Thyroid gland (tissue), 4 donors: ENCODE measurements at regions of chr2 and their contacts with region 1.

Region 1: DNA sequence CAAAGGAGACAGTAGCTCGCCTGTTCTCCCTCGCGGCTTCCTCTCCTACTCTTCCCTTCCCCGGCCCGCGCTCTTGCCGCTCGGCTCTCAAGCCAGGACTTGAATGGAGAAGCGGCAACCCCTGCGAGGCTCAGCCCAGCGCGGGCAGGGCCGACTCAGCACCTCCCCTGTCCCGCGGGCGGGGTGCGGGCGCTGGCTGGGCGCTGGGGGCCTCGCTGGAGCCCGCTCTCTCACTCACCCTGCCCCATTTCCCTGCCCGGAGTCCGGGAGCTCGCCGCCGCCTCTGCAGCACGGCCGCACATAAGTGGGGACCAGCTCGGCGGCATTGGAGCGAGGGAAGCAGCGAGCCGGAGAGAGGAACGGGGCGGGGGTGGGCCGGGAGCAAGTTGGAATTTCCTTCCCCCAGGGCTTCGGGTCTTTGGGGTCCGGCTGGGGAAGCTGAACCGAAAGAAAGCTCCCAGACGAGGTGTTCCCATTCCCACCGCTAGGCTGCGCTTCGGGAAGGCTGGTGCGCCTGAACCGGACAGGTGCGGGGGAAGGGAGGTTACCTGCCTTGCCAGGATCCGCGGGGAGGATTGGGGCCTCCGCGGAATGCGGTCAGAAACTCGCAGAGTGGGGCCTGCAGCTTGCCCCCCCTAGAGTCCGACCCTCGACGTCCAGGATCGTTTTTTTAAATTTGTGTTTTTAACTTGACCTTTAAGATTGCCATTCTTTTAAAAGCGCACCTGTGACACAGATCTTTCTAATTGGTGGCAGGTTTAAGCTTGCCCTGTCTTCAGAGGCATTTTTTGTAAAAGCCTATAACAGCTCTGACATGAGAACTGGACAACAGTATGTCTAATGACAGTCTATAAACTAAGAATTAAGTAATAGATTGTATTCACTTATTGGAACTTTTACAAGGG is at the start of gene COBLL1:
- DNase-seq: peak; percentile 92 to 95
- H3K4me3 ChIP-seq: peak within 1 kb of the TSS; percentile 71 to 79 (median 72)
- H3K27ac ChIP-seq: peak within 1 kb of the TSS; percentile 96 to 99 (median 99)
- H3K4me1 ChIP-seq: peaks cover 10 to 28% of the 10 kb centered on the region in 2 donors
- H3K27me3 ChIP-seq: no peaks in the 10 kb centered on the region
- CTCF ChIP-seq: peak; percentile 33 to 94 (median 89)
- POLR2A ChIP-seq: peak in 1 of 2 donors; percentile 84
- total RNA-seq, gene COBLL1: 41.8 to 90.8 (median 76.9) TPM

Region 2: GRCh38 chr2:164757924-164758695 is 83.9 kb before region 1 on chr2:
- intact Hi-C with region 1: loop called (anchors 10 kb)
- DNase-seq: no peak
- H3K4me3 ChIP-seq: no peak overlapping the region
- H3K27ac ChIP-seq: no peak overlapping the region
- H3K4me1 ChIP-seq: peaks cover 0 to 4% of the 10 kb centered on the region in 2 donors
- H3K27me3 ChIP-seq: no peaks in the 10 kb centered on the region
- CTCF ChIP-seq: no peak
- POLR2A ChIP-seq: no peak

Region 3: DNA sequence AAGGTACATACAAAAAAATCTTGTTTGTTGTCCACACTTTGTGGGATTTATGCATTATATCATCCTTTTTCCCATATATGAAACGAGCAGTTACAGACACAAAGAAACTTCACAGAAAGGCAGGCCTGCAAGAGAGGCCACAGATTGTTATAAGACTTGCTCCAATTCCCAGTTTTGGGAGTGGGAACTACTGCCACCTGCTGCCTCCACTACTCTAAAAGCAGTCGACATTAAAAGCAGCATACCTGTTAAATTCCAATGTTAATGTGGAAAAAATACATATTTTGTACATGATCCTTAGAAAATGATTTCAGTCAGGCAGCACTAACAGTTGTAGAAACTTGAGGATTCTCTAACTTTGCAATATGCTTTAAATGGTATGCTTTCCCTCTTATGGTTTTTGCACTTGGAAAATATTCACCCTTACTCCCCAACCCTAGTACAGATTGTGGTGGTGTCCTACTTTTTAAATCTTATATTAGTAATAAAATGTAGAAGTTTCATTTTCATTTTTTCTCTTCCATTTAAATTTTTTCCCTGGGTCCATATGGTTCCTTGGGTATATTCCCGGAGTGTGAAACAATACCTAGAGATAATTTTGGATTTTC is 75.4 kb after region 1 on chr2:
- intact Hi-C with region 1: loop called (anchors 10 kb)
- DNase-seq: peak; percentile 64 to 73
- H3K4me3 ChIP-seq: no peak overlapping the region
- H3K27ac ChIP-seq: no peak overlapping the region
- H3K4me1 ChIP-seq: peaks cover 9 to 15% of the 10 kb centered on the region in 2 donors
- H3K27me3 ChIP-seq: no peaks in the 10 kb centered on the region
- CTCF ChIP-seq: peak in 5 of 6 experiments; percentile 38 to 81 (median 64)
- POLR2A ChIP-seq: no peak

Region 4: DNA sequence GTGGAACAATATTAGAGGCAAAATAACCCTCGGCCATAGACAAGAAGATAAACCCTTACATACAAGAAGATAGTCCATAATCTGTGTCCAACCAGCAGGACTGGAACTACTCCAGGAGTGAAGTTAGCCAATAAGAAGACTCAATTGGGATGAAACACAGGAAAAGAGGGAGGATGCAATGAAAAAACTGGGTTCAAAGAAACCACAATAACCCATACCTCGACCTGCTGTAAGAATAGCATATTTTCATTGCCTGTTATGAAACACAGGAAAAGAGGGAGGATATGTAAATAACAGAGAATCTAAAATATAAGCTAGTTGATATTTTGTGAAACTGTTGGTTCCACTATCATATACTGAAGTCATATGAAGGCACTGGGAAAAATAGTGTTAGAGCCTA is 540.4 kb after region 1 on chr2:
- intact Hi-C with region 1: no loop called
- DNase-seq: no peak
- H3K4me3 ChIP-seq: no peak overlapping the region
- H3K27ac ChIP-seq: no peak overlapping the region
- H3K4me1 ChIP-seq: no peaks in the 10 kb centered on the region
- H3K27me3 ChIP-seq: no peaks in the 10 kb centered on the region
- CTCF ChIP-seq: no peak
- POLR2A ChIP-seq: no peak